ENCODE measurements at regions of chr10 and their contacts with region 1.

Region 1: DNA sequence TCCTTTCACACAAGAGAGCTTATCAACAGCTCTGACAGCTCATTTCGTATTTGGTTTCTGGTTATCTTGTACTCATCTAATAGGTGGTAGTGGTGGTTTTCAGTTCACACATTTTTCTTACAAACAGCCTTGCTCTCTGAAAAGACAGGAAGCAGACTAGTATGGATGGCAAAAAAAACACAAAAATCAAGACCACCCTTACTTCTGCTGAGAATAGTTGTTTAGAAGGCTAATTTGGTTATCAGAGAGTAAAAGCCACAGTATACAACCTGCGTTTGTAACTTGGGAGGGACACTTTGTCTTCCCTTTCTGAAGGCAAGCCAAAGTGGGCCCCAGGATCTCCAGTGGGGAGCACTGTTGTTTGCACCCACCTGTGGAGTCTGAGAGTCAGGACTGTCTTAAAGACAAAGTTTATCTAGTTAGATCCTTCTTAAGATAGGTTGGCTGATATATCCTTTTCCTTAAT is 68.0 kb downstream of the PIP4K2A start:
- DNase-seq: no peak
- H3K4me3 Mint-ChIP-seq: peak overlapping the region; percentile 30
- H3K27ac Mint-ChIP-seq: peak overlapping the region; percentile 90
- H3K4me1 Mint-ChIP-seq: peaks cover 86% of the 10 kb centered on the region
- H3K27me3 Mint-ChIP-seq: no peaks in the 10 kb centered on the region

Region 2: DNA sequence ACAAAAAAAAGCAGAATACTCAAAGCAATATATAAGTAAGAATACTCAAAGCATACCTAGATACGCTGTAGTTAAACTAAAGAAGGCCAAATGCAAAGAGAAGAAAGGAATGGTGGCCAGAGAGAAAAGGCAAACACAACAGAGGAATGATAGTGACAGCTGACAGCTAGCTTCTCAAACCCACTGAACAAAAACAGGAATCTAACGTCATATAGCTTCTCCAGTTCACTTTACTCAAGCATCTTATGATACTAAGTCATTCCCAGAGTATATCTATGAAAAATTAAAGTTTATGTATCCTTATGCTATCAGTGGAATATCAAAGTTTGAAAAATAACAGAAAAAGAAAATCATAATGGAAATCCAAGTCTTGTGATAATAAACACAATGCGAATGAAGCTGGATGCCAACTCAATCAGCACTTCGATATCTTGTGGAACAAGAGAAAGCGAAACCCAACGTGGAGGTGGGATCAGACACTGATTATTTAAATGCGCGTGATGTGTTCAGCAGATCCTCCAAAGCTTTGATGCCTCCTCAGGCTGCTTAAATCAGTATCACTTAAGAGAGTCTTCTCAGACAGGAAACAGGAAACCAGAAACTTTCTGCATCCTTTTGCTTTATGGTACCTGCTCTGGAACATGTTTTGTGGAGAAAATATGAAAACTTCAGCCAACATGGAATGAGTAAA is 34.9 kb before region 1 on chr10:
- CTCF ChIA-PET with region 1: interaction called, 4 read pairs
- intact Hi-C with region 1: loop called (anchors 1 kb)
- DNase-seq: peak; percentile 78
- H3K4me3 Mint-ChIP-seq: peak overlapping the region; percentile 41
- H3K27ac Mint-ChIP-seq: peak overlapping the region; percentile 79
- H3K4me1 Mint-ChIP-seq: peaks cover 86% of the 10 kb centered on the region
- H3K27me3 Mint-ChIP-seq: no peaks in the 10 kb centered on the region

Measured in activated naive CD4-positive, alpha-beta T cell treated with anti-CD3 and anti-CD28 coated beads for 36 hours (primary cell).